ENCODE measurements at regions of chr3 and their contacts with region 1.

Region 1: GRCh38 chr3:32018757-32019564 is 37.4 kb downstream of the ZNF860 start:
- DNase-seq: no peak
- H3K4me3 Mint-ChIP-seq: no peak overlapping the region
- H3K27ac Mint-ChIP-seq: no peak overlapping the region
- H3K4me1 Mint-ChIP-seq: peaks cover 2% of the 10 kb centered on the region
- H3K27me3 Mint-ChIP-seq: peaks cover 8% of the 10 kb centered on the region

Region 2: DNA sequence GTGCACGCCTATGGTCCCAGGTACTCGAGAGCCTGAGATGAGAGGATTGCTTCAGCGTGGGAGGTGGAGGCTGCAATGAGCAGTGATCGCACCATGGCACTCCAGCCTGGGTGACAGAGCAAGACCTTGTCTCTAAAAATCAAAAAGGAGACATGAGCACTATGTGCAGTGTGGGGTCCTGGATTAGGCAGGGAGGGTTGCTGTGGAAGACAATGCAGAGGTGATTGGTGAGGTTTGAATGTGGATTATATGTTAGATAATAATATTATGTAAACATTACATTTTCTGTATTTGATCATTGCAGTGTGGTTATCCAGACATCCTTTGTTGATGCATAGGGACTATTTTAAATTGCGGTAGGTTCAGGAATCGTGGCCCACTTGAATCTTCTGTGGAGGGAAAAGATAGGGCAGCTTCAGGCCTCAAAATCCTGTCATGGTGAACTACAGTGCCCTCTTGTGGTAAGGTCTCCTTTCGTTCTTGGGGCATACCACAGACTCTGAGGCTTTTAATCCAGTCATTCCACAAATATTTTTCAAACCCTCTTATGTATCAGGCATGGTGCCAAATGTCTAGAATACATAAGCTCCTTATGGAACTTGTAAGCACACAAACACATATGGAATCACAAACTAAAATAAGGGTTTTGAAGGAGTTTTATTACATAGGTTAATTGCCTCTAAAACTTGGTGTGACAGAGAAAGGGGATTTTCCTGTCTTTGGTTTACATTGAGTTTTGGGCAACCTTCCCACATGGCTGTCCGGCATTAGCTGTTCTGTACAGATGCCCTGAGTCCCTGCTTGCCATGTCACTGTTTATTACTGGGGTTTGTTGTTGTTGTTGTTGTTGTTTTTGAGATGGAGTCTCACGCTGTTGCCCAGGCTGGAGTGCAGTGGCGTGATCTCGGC is 125.1 kb after region 1 on chr3:
- CTCF ChIA-PET with region 1: interaction called, 14 read pairs
- POLR2A ChIA-PET with region 1: no interaction called
- DNase-seq: peak; percentile 70
- H3K4me3 Mint-ChIP-seq: no peak overlapping the region
- H3K27ac Mint-ChIP-seq: peak overlapping the region; percentile 41
- H3K4me1 Mint-ChIP-seq: peaks cover 32% of the 10 kb centered on the region
- H3K27me3 Mint-ChIP-seq: no peaks in the 10 kb centered on the region

Measured in activated CD4-positive, alpha-beta T cell treated with anti-CD3 and anti-CD28 coated beads, Interleukin-2, amount 10 ng/mL, durations not matched to agents 7 days and 5 days (primary cell).